HEK293 (cell line): ENCODE measurements at regions of chr7 and their contacts with region 1.

Region 1: GRCh38 chr7:141975806-141976523 is 2.4 kb upstream of the TAS2R38 start:
- H3K4me3 ChIP-seq: peak overlapping the region; percentile 35
- H3K27ac ChIP-seq: no peak overlapping the region
- H3K4me1 ChIP-seq: no peaks in the 10 kb centered on the region
- CTCF ChIP-seq: peak; percentile 92

Region 2: GRCh38 chr7:141960687-141961422 is 15.1 kb before region 1 on chr7:
- CTCF ChIA-PET with region 1: interaction called, 20 read pairs
- POLR2A ChIA-PET with region 1: no interaction called
- H3K4me3 ChIP-seq: no peak overlapping the region
- H3K27ac ChIP-seq: no peak overlapping the region
- H3K4me1 ChIP-seq: no peaks in the 10 kb centered on the region
- CTCF ChIP-seq: no peak

Region 3: DNA sequence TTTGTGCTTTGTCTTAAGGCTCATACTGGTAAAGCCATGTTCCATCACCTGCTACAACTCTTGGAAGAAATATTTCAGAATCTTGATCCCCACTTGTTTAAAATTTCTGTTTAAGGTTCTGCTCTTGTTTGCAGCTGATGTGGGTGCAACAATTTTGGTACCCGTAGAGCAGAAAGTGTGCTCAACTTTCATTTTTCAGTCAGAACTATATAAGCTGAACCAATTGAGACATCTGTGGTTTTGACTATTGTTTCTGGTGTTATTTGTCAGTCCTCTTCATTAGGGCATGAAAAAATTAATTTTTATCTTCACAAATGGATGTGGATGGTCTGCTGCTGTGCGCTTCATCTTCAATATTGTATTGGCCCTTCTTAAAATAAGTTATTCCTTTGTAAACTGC is 30.6 kb after region 1 on chr7:
- CTCF ChIA-PET with region 1: interaction called, 12 read pairs
- POLR2A ChIA-PET with region 1: no interaction called
- H3K4me3 ChIP-seq: no peak overlapping the region
- H3K27ac ChIP-seq: no peak overlapping the region
- H3K4me1 ChIP-seq: no peaks in the 10 kb centered on the region
- CTCF ChIP-seq: no peak

Region 4: DNA sequence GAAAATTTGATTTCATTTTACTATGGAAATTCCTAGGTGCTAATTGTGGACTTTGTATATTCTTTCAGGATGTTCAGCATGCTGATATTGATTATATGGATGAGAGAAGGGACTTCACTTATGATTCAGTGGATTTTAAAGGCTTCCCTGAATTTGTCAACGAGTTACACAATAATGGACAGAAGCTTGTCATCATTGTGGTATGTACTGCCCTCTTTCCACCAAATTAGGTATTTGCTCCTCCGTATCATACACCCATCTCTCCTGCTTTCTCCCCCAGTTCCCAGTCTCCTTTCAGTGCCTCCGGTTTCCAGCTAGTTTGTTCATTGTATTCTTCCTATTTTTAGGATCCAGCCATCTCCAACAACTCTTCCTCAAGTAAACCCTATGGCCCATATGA is 54.3 kb after region 1 on chr7:
- CTCF ChIA-PET with region 1: interaction called, 70 read pairs
- POLR2A ChIA-PET with region 1: no interaction called
- H3K4me3 ChIP-seq: no peak overlapping the region
- H3K27ac ChIP-seq: no peak overlapping the region
- H3K4me1 ChIP-seq: no peaks in the 10 kb centered on the region
- CTCF ChIP-seq: 0 out of 2 replicates have a peak, but pooled peaks have one; percentile 20

Region 5: DNA sequence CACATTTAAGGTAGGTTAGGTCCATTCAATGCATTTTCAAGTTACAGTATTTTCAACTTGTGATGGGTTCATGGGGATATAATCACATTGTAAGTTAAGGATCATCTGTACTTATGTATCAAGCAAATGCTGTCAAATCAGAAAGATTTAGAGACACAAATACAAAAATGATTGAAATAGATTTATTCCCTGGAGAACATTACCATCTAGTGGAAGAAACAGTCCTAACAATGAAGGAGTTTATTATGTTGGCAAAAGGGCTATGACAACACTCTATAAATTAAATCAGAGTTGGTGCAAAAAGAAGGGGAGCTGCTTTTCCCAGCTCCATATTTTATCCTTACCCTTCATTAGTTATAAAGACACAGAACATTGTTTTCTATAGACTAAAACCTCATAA is 212.9 kb after region 1 on chr7:
- CTCF ChIA-PET with region 1: interaction called, 37 read pairs
- POLR2A ChIA-PET with region 1: no interaction called
- H3K4me3 ChIP-seq: no peak overlapping the region
- H3K27ac ChIP-seq: no peak overlapping the region
- H3K4me1 ChIP-seq: no peaks in the 10 kb centered on the region
- CTCF ChIP-seq: 0 out of 2 replicates have a peak, but pooled peaks have one; percentile 23

Region 6: DNA sequence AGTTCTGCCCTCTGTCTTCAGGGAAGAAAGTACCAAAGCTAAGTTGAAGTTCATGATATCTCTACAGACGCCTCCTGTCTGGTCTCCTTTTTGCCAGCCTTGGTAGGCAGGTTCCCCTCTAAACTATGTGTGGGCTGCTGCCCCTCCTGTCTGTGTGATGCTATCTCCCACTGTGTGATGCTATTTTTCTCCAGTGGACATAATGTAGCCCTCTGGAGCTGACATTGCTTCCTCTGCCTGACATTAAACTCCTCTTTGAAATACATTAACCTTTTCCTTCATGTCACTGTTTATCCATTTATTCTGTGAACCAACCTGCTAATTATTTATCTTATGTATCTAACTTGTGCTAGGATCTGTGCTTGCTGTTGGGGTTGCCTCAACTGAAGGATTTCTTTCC is 282.0 kb after region 1 on chr7 and contains the start of gene PRSS58:
- CTCF ChIA-PET with region 1: no interaction called
- POLR2A ChIA-PET with region 1: no interaction called
- H3K4me3 ChIP-seq: no peak within 1 kb of the TSS
- H3K27ac ChIP-seq: no peak within 1 kb of the TSS
- H3K4me1 ChIP-seq: no peaks in the 10 kb centered on the region
- CTCF ChIP-seq: no peak

Region 7: GRCh38 chr7:142301923-142302550 is 326.1 kb after region 1 on chr7:
- CTCF ChIA-PET with region 1: interaction called, 15 read pairs
- POLR2A ChIA-PET with region 1: no interaction called
- H3K4me3 ChIP-seq: no peak overlapping the region
- H3K27ac ChIP-seq: no peak overlapping the region
- H3K4me1 ChIP-seq: no peaks in the 10 kb centered on the region
- CTCF ChIP-seq: no peak